PC-3 (cell line): ENCODE measurements at regions of chr6 and their contacts with region 1.

Region 1: GRCh38 chr6:20877008-20877937 is 343.0 kb downstream of the CDKAL1 start:
- DNase-seq: peak; percentile 98
- ATAC-seq: peak; percentile 96
- H3K4me3 ChIP-seq: peak overlapping the region; percentile 8; the same call in 1 of the 2 replicates
- H3K27ac ChIP-seq: peak overlapping the region; percentile 88
- H3K4me1 ChIP-seq: peaks cover 45% of the 10 kb centered on the region
- H3K27me3 ChIP-seq: no peaks in the 10 kb centered on the region
- CTCF ChIP-seq: no peak

Region 2: DNA sequence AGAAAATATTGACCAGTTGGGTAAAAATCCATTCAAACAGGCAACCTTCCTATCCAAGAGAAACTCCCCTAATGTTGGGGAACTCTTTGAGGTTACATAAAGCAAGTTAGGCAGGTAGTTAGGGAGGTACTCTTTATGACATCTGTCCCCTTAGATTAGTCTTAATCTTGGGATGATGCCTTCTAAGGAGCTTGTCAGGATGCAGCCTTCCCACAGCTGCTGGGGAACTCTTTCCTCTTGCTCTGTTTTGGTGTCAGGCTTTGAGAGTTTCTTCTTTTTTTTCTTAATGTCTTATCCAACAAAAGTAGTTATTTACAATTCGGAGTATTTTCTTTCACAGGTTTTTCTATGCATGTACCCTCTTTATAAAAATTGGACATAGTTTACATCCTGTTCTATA is 148.2 kb before region 1 on chr6:
- CTCF ChIA-PET with region 1: no interaction called
- POLR2A ChIA-PET with region 1: no interaction called
- intact Hi-C with region 1: no loop called
- DNase-seq: no peak
- ATAC-seq: no peak
- H3K4me3 ChIP-seq: no peak overlapping the region
- H3K27ac ChIP-seq: no peak overlapping the region
- H3K4me1 ChIP-seq: no peaks in the 10 kb centered on the region
- H3K27me3 ChIP-seq: no peaks in the 10 kb centered on the region
- CTCF ChIP-seq: no peak

Region 3: GRCh38 chr6:20919677-20920385 is 42.6 kb after region 1 on chr6:
- CTCF ChIA-PET with region 1: no interaction called
- POLR2A ChIA-PET with region 1: no interaction called
- intact Hi-C with region 1: loop called (anchors 5 kb)
- DNase-seq: peak; percentile 49
- ATAC-seq: peak; percentile 45
- H3K4me3 ChIP-seq: no peak overlapping the region
- H3K27ac ChIP-seq: peak overlapping the region; percentile 29; the same call in 1 of the 2 replicates
- H3K4me1 ChIP-seq: peaks cover 45% of the 10 kb centered on the region
- H3K27me3 ChIP-seq: no peaks in the 10 kb centered on the region
- CTCF ChIP-seq: no peak

Region 4: GRCh38 chr6:21109391-21110178 is 232.3 kb after region 1 on chr6:
- CTCF ChIA-PET with region 1: no interaction called
- POLR2A ChIA-PET with region 1: interaction called, 4 read pairs
- intact Hi-C with region 1: loop called (anchors 1 kb)
- DNase-seq: peak; percentile 94
- ATAC-seq: peak; percentile 77
- H3K4me3 ChIP-seq: peak overlapping the region; percentile 46
- H3K27ac ChIP-seq: peak overlapping the region; percentile 96
- H3K4me1 ChIP-seq: peaks cover 45% of the 10 kb centered on the region
- H3K27me3 ChIP-seq: no peaks in the 10 kb centered on the region
- CTCF ChIP-seq: no peak

Region 5: GRCh38 chr6:21220271-21220987 is 343.2 kb after region 1 on chr6:
- CTCF ChIA-PET with region 1: no interaction called
- POLR2A ChIA-PET with region 1: no interaction called
- intact Hi-C with region 1: loop called (anchors 5 kb)
- DNase-seq: peak; percentile 75
- ATAC-seq: peak; percentile 73
- H3K4me3 ChIP-seq: no peak overlapping the region
- H3K27ac ChIP-seq: no peak overlapping the region
- H3K4me1 ChIP-seq: peaks cover 13% of the 10 kb centered on the region
- H3K27me3 ChIP-seq: no peaks in the 10 kb centered on the region
- CTCF ChIP-seq: no peak